Common myeloid progenitor, CD34-positive (primary cell): ENCODE measurements at regions of chr11 and their contacts with region 1.

Region 1: GRCh38 chr11:66386171-66387069 is 14.9 kb upstream of the SLC29A2 start:
- DNase-seq: peak; percentile 78 to 90 (median 79)
- H3K4me3 ChIP-seq: peak overlapping the region in 4 of 7 experiments; percentile 35 to 63 (median 49)
- H3K27ac ChIP-seq: no peak overlapping the region
- H3K4me1 ChIP-seq: peaks cover 0 to 7% (median 4%) of the 10 kb centered on the region in 4 experiments
- H3K27me3 ChIP-seq: peaks cover 0 to 7% (median 0%) of the 10 kb centered on the region in 5 experiments

Region 2: DNA sequence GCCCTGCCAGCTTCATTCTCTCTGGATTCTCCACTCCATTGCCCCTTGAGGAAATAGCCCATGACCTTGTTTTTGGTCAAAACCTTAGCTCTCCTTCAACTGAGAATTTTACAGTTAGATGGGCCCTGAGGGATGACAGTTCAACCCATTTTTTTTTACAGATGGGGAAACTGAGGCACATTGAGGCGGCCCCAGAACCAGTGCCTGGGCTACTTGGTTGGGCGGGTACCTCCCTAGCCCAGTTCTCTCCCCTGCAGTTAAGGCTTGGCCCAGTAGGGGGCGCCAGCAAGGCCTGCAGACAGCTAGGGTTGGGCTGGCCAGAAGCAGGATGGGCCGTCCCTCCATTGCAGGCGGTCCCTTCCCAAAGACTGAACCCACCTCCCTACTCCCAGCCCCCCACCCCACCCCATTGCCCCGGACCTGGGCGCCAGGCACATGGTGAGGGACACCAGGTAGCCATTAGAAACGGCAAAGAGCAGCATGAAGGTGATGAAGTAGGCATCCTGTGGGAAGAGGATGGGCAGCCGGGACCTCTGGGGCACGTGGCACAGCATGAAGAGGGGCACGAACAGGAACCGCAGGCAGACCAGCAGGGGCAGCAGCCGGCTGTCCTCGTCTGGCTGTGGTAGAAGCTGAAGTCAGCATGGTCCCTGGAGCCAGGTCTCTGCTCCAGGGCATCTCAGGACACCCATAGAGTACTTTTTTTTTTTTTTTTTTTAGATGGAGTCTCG is 22.4 kb before region 1 on chr11:
- CTCF ChIA-PET with region 1: interaction called, 18 read pairs
- POLR2A ChIA-PET with region 1: interaction called, 3 read pairs
- DNase-seq: peak in 2 of 3 donors; percentile 55 to 64
- H3K4me3 ChIP-seq: no peak overlapping the region
- H3K27ac ChIP-seq: no peak overlapping the region
- H3K4me1 ChIP-seq: no peaks in the 10 kb centered on the region
- H3K27me3 ChIP-seq: no peaks in the 10 kb centered on the region

Region 3: GRCh38 chr11:66371627-66372415 is 14.6 kb before region 1 on chr11 and contains the start of gene SLC29A2:
- CTCF ChIA-PET with region 1: interaction called, 19 read pairs
- POLR2A ChIA-PET with region 1: no interaction called
- DNase-seq: peak; percentile 78 to 90 (median 87)
- H3K4me3 ChIP-seq: peak within 1 kb of the TSS; percentile 54 to 89 (median 75)
- H3K27ac ChIP-seq: peak within 1 kb of the TSS; percentile 50 to 77
- H3K4me1 ChIP-seq: peaks cover 0 to 33% (median 15%) of the 10 kb centered on the region in 4 experiments
- H3K27me3 ChIP-seq: no peaks in the 10 kb centered on the region